GM18951 (cell line): ENCODE measurements at regions of chr3 and their contacts with region 1.

Region 1: DNA sequence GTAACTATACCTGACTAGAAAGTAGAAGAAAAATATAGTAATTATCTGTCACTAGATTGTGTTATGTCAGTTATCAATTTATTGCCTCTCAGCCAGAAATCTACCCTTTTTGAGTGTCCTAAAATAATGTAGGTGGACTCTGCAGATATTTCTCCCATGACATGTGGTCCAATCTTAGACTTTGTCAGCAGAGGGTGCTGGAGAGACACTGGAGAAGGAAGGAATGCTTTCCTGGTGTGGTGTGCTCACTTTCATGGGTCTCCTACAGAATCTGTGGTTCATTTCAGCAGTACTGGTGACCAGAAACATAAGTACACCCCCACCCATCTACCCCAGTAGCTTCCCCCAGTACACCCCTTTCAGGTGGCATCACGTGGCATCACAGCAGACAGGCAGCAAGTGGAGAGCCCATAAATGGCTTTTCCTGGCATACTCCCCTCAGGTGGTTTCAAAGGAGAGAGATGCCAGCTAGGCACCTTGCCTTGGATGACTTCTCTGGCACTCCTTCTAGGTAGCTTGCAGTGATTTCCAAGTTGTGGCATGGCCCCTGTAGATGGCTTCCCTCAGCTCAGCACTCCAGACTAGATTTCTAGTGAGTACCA is 114.7 kb downstream of the GADL1 start:
- POLR2A ChIP-seq: no peak

Region 2: DNA sequence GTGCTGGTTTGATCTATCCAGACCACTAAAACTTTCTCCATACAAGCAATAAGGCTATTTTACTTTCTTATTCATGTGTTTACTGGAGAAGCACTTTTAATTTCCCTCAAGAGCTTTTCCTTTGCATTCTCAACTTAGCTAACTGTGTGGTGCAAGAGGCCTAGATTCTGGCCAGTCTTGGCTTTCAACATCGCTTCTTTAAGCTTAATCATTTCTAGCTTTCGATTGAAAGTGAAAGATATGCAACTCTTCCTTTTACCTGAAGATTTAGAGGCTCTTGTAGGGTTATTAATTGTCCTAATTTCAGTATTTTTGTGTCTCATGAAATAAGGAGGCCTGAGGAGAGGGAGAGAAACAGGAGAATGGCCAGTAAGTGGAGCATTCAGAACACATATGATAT is 349.5 kb after region 1 on chr3:
- in situ Hi-C with region 1: loop called (anchors 10 kb)
- POLR2A ChIP-seq: no peak

Region 3: DNA sequence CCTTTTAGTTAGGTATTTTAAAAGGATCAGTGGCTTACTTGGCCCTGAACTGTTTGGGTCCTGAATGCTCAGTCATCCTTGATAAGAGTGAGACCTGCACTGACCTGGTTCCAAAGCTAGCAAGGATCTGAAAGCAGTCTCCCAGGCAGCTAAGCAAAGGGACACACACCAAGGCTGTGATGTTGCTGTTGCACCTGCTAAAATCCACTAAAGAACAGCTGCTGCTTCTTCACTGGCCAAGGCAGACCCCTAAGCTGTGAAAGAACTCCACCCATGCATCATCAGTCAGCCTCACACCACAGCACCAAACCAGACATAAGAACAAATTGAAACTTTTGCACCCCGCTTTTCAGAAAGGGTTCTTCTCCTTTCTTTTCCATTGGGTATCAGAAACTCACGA is 539.5 kb after region 1 on chr3:
- in situ Hi-C with region 1: no loop called
- POLR2A ChIP-seq: no peak